Heart left ventricle (tissue), 16 donors: ENCODE measurements at regions of chr5 and their contacts with region 1.

Region 1: DNA sequence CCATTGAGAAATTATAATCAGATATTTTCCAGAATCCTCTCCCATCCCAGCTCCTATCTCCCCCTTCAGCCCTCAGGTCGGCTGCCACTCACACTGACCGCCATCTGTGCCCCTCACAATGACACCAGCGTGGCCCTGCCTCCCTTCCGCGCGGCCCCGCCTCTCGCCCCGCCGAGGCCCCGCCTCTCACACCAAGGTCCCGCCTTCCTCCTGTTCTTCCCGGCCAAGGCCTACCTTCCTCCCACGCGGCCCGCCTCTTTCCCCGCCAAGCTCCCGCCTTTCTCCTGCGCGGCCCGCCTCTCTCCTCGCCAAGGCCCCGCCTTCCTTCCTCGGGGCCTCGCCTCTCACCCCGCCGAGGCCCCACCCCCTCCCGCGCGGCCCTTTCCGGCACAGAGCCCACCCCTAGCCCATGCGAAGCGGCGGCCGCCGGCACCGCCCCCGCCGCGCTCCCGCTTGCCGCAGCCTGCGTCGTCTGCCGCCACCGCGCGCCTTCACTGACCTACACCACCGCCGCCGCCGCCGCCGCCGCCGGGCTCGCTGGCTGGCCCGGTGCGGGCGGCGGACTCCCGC is at the start of gene DNAJC21:
- DNase-seq: peak; percentile 98 to 99 (median 99)
- ATAC-seq: peak; percentile 96 to 99 (median 98)
- H3K4me3 ChIP-seq: peak within 1 kb of the TSS; percentile 56 to 95 (median 86)
- H3K27ac ChIP-seq: peak within 1 kb of the TSS; percentile 61 to 97 (median 92)
- H3K4me1 ChIP-seq: peaks cover 0 to 26% (median 18%) of the 10 kb centered on the region in 12 donors
- H3K27me3 ChIP-seq: no peaks in the 10 kb centered on the region
- CTCF ChIP-seq: no peak
- POLR2A ChIP-seq: peak in 1 of 2 donors; percentile 45
- total RNA-seq, gene DNAJC21: 35.7 to 60.1 (median 51.1) TPM

Region 2: DNA sequence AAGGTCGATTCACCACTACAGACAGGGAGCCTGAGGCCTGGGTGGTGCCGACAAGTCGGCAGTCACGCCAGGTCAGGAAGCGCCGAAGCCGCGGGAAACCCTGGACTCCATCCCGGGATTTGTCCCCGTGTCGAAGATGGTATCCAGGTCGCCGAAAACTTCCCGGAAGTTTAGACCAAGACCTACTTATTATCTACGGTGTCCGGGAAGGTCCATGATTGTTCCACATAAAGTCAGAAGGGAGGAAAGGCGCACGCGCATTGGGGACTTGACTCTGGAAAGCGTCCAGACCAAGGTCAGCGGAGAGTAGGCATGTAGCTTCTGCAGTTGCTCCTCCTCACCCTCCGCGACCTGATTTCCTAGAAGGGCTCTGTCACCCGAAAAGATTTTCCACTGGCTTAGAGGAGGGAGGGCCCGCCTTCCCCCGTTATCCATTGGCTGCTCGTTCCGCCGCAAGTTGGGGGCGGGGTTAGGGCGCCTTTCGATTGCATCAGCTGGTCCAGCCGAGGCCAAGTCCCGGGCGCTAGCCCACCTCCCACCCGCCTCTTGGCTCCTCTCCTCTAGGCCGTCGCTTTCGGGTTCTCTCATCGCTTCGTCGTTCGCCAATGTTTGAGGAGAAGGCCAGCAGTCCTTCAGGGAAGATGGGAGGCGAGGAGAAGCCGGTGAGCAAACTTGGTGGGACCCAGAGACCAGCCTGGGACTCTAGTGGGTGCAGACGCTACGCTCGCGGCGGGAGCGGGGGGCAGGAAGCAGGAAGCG is 1488.6 kb before region 1 on chr5 and contains the start of gene TARS1:
- intact Hi-C with region 1: loop called in 3 of 10 experiments (anchors 5 to 10 kb)
- DNase-seq: peak; percentile 98 to 99 (median 99)
- ATAC-seq: peak; percentile 96 to 99 (median 98)
- H3K4me3 ChIP-seq: peak within 1 kb of the TSS; percentile 51 to 93 (median 78)
- H3K27ac ChIP-seq: peak within 1 kb of the TSS; percentile 69 to 98 (median 94)
- H3K4me1 ChIP-seq: peaks cover 0 to 53% (median 30%) of the 10 kb centered on the region in 12 donors
- H3K27me3 ChIP-seq: no peaks in the 10 kb centered on the region
- CTCF ChIP-seq: no peak
- POLR2A ChIP-seq: peak in 1 of 2 donors; percentile 83
- total RNA-seq, gene TARS1: 58.1 to 79.7 (median 71.9) TPM